Activated CD4-positive, alpha-beta T cell treated with anti-CD3 and anti-CD28 coated beads, Interleukin-2, amount 10 ng/mL, durations not matched to agents 24 days and 14 days (primary cell): ENCODE measurements at regions of chrX and their contacts with region 1.

Region 1: DNA sequence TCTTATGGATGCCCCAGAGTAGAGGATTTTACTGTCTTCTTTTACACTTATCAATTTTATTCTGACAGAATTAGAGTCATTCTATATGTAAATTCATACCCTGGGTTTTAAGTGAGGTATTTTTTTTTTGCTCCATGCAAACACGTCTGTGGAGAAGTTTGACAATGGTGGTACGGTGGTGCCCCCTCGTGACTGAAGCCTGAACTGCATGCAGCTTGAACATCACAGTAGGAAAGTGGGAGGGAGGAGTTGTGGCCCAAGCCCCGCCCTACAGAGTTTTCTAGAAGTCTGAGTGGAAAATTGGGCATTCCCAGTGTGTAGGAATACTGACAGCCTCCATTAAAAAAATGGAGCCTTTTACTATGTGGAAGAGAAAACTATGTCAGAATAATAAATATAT is 73.3 kb upstream of the RAB40AL start:
- DNase-seq: peak; percentile 93
- H3K4me3 Mint-ChIP-seq: no peak overlapping the region
- H3K27ac Mint-ChIP-seq: no peak overlapping the region
- H3K4me1 Mint-ChIP-seq: no peaks in the 10 kb centered on the region
- H3K27me3 Mint-ChIP-seq: no peaks in the 10 kb centered on the region

Region 2: DNA sequence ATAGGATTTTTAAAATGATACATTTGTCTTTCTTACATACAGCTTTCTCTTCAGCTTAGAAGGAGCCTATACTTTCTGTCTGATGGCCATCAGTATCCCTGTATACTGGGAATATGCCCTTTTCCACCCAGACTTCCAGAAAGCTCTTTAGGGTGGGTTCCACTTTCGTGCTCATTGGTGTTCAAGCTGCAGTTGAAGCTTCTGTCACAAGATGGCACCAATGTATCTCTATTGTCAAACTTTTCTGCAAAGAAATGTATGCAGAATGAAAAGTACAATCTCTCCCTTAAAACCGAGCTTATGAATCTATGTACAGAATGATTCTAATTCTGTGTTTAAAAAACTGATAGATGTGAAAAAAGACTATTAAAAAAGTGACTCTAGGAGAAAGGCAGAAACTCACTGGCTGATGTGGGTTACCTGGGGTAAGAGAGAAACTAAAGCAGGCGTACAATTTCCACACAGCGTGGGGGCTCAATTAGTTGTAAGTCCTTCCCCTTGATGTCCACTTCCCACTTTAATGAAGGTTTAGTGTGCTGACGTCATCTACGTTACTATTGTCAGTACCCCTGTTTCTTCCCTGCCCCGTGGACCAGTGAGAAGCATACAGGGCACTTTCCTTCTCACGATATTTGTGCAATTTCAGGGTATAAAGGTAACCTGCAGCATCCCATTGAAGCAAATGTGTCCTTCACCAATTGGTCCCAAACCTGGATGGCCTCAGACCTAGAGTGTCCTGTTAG is 795.6 kb before region 1 on chrX:
- intact Hi-C with region 1: loop called (anchors 5 kb)
- DNase-seq: peak; percentile 54
- H3K4me3 Mint-ChIP-seq: no peak overlapping the region
- H3K27ac Mint-ChIP-seq: no peak overlapping the region
- H3K4me1 Mint-ChIP-seq: no peaks in the 10 kb centered on the region
- H3K27me3 Mint-ChIP-seq: no peaks in the 10 kb centered on the region

Region 3: DNA sequence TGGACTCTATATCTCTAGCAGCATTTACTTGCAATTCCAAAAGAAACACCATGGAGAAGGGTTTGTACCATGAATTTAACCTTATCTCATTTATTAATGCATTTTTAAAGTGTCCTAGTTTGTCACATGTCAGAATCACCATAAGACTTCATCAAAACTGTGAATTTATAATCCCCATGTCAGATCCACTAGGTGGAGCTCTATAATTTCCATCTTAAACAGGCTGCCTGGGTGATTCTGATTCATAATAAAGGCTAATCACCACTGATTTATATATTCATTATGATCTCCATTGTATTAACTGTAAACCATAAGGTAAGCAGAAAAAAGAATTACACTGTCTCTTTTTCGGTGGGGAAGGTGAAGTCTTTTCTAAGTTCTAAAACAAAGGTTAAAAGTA is 734.3 kb before region 1 on chrX:
- intact Hi-C with region 1: no loop called
- DNase-seq: no peak
- H3K4me3 Mint-ChIP-seq: no peak overlapping the region
- H3K27ac Mint-ChIP-seq: no peak overlapping the region
- H3K4me1 Mint-ChIP-seq: no peaks in the 10 kb centered on the region
- H3K27me3 Mint-ChIP-seq: peaks cover 19% of the 10 kb centered on the region

Region 4: GRCh38 chrX:102899940-102900916 is 36.5 kb after region 1 on chrX:
- intact Hi-C with region 1: loop called (anchors 5 kb)
- DNase-seq: peak; percentile 89
- H3K4me3 Mint-ChIP-seq: peak overlapping the region; percentile 15
- H3K27ac Mint-ChIP-seq: no peak overlapping the region
- H3K4me1 Mint-ChIP-seq: peaks cover 3% of the 10 kb centered on the region
- H3K27me3 Mint-ChIP-seq: no peaks in the 10 kb centered on the region

Region 5: DNA sequence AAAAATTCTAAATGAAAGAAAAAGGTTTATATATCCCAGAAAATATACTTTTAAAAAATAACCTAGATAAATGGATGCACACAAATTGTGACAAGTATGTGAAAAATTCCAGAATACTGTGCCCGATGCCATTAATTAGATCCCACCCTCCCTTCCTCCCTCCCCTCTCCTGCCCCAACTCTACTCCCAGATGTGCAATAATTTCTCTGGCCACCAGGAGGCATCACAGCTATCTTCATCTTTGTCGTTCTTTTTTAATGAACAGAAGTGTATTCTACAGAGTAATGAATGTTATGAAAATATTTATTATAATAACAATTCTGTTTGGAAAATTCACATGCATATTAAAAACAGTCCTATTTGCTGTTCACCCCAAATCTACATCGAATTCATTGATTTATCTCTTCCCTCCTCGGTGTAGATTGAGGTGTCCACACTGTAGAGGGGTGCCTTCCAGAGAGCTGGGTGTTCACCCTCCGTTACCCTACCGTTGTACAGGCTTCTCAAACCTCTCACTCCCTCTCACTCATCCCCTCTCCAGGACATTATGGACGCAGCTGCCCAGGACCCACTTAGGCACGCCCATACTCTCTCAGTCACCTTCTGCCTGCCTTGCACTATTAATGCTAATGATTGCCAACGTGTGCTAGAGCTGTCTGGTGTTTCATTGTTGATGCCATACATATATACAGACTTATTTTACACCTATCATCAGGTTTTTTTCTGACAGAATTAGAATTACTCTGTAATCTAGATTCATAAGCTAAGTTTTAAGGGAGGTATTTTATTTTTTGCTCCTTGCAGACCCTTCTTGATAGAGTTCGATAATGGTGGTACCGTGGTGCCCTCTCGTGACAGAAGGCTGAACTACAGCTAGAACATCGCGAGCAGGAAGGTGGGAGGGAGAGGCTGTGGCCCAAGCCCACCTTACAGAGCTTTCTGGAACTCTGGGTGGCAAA is 87.5 kb after region 1 on chrX:
- intact Hi-C with region 1: no loop called
- DNase-seq: peak; percentile 82
- H3K4me3 Mint-ChIP-seq: peak overlapping the region; percentile 3
- H3K27ac Mint-ChIP-seq: no peak overlapping the region
- H3K4me1 Mint-ChIP-seq: no peaks in the 10 kb centered on the region
- H3K27me3 Mint-ChIP-seq: no peaks in the 10 kb centered on the region